Activated CD8-positive, alpha-beta T cell treated with anti-CD3 and anti-CD28 coated beads, Interleukin-2, amount 10 ng/mL, durations not matched to agents 7 days and 5 days (primary cell): ENCODE measurements at regions of chr15 and their contacts with region 1.

Region 1: DNA sequence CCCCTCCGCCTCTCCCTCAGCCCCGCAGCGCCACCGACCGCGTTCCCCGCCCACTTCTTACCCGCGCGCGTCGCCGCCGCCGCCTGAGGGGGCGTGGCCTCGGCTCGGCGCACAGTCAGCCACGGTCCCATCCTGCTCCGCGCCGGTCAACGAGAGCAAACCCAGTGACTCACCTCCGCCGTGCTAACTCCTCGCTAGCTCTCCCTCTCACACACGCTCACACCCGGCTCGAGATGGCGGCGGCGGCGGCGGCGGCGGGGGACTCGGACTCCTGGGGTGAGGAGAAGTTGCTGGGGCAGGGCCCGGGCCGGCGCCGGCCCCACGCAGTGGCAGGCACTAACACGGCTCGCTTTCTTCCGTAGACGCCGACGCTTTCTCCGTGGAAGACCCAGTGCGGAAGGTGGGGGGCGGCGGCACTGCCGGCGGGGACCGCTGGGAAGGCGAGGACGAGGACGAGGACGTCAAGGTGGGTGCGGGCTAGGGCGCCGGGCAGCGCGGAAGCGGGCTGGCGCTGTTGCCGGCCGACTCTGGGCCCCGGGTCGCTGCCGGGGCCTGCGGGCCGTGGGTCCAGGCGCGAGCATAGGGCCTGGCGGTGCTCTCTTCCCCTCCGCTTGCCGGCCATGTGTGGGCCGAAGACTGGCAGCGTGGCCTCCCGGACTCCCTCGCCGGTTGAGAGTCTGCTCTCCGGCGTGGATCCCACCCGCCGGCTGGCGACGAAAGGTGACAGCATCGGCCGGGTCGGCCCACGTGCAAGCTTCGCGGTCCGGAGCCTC is at the start of gene EIF3J:
- DNase-seq: peak; percentile 95
- ATAC-seq: peak; percentile 95
- H3K4me3 Mint-ChIP-seq: peak within 1 kb of the TSS; percentile 78
- H3K27ac Mint-ChIP-seq: peak within 1 kb of the TSS; percentile 84
- H3K4me1 Mint-ChIP-seq: peaks cover 53% of the 10 kb centered on the region
- H3K27me3 Mint-ChIP-seq: no peaks in the 10 kb centered on the region
- total RNA-seq, gene EIF3J: 91.6 to 100 TPM

Region 2: DNA sequence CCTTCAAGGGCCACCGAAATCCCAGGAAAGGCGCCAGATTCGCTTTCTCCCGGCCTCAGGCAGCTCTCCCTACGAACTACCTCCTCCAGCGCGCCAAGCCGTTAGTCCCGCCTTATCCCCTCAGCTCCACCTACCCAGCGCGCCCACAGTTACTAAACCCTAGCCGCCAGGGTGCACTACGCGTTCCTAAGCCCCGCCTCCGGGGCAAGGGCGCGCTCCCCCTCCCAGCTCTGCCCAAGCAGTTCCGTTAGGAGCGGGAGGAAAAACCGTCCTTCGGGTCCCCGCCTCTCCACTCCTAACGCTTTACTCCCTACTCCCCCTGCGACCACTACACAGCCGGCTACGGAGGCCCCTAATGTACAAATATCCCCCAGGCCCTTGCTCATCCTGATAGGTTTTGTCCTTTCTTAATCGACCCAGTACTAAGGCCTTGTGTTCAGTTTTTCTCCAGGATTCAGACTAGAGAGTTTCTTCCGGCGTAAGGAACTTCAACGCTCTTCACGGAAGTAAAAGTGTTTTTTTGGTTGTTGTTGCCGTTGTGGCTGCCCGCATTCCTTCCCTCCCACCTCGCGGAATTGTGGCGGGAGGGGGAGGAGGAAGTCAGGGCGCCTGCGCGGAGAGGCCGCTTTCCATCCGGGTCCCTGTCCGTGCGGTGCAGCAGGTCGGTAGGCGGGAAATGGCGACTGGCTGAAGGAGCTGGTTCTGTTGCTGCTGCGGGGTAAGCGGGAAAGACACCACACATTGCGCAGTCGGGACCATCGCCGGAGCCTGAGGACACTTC is 110.0 kb before region 1 on chr15 and contains the start of gene CTDSPL2:
- CTCF ChIA-PET with region 1: interaction called, 3 read pairs
- POLR2A ChIA-PET with region 1: interaction called, 21 read pairs
- DNase-seq: peak; percentile 96
- ATAC-seq: peak; percentile 98
- H3K4me3 Mint-ChIP-seq: peak within 1 kb of the TSS; percentile 96
- H3K27ac Mint-ChIP-seq: peak within 1 kb of the TSS; percentile 99
- H3K4me1 Mint-ChIP-seq: peaks cover 43% of the 10 kb centered on the region
- H3K27me3 Mint-ChIP-seq: no peaks in the 10 kb centered on the region
- total RNA-seq, gene CTDSPL2: 76.6 to 79.0 TPM

Region 3: DNA sequence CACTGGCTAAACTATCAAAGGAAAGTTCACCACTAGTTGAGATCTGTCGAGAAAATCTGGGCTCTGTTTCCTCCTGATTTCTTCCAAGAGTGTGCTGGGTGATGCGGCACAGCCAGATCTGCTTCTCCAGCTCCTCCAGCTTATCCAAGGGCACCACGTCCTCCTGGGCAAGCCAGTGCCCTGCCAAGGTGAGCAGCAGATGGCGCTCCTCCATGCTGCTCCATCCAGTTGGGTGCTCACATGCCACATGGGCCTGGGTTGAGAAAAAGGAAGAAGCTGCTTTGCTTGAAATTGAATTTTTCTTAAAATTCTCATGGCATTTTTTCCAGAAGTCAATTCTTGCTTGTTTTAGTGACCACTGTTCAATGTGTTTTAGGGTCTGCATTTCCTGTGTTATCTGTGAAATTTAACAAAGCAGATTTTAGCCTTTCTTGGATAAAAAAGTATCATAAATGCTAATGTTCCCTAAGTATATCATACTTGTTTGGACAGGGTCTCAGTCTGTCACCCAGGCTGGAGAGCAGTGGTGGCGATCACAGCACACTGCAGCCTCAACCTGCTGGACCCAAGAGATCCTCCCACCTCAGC is 47.1 kb after region 1 on chr15:
- CTCF ChIA-PET with region 1: interaction called, 12 read pairs
- POLR2A ChIA-PET with region 1: no interaction called
- DNase-seq: peak; percentile 64
- ATAC-seq: peak; percentile 79
- H3K4me3 Mint-ChIP-seq: no peak overlapping the region
- H3K27ac Mint-ChIP-seq: no peak overlapping the region
- H3K4me1 Mint-ChIP-seq: peaks cover 2% of the 10 kb centered on the region
- H3K27me3 Mint-ChIP-seq: no peaks in the 10 kb centered on the region

Region 4: DNA sequence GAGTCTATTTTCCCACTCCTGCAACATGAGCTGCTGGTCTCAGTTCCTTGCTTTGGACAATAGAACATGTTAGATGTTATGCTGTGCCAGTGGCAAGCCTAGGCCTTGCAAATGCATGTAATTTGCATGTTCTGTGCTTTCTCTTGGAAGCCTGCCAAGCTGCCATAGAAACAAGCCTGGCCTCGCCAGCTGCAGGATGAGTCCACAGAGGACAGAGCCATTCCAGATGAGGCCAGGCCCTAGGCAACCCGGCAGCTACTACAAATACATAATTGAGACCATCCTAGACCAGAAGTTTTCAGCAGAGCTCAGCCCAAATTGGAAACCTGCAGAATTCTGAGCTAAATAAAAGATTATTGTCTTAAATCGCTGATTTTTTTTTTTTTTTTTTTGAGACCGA is 238.8 kb after region 1 on chr15:
- CTCF ChIA-PET with region 1: no interaction called
- POLR2A ChIA-PET with region 1: no interaction called
- DNase-seq: no peak
- ATAC-seq: no peak
- H3K4me3 Mint-ChIP-seq: no peak overlapping the region
- H3K27ac Mint-ChIP-seq: no peak overlapping the region
- H3K4me1 Mint-ChIP-seq: peaks cover 5% of the 10 kb centered on the region
- H3K27me3 Mint-ChIP-seq: peaks cover 3% of the 10 kb centered on the region